ENCODE measurements at regions of chr3 and their contacts with region 1.

Region 1: DNA sequence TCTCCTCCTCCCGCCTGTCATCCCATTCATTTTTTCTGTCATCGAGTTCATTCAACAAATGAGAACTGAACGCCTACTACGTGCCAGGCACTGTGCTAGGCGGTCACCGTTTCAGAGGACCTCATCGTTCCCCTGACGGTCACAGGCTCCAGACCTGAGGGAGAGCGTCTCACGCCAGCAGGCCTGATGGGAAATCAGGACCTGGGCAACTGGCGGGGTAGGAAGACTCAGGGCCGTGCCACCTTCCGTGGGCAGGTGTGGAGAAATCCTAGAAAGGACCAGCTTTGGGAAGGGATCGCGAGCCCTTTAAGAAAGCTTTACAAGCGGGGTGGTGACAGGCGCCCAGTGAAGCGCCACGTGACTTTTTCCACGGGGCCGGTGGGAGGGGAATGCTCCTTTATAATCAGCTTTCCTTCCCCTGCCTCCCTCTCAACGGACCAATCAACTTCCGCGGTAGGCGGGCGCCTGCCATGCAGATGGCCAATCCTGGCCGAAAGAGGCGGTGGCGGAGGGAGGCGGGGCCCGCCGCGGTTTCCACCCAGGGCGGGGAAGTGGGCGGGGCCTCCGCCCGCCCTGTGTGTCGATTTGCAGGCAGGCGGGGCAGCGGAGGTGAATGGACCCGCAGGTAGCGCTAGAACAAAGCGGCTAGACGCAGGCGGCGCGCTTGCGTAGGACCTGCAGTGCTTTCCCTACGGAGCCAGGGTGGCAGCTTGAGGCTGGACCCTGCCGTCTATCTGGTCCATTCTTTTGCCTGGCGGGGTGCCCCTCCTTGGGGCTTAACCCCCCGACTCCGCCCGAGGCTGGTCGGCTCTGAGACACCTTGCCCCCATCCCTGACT is 816 bp upstream of the DUSP7 start:
- DNase-seq: peak; percentile 100
- H3K4me3 Mint-ChIP-seq: peak overlapping the region; percentile 78
- H3K27ac Mint-ChIP-seq: peak overlapping the region; percentile 92
- H3K4me1 Mint-ChIP-seq: peaks cover 28% of the 10 kb centered on the region
- H3K27me3 Mint-ChIP-seq: no peaks in the 10 kb centered on the region

Region 2: DNA sequence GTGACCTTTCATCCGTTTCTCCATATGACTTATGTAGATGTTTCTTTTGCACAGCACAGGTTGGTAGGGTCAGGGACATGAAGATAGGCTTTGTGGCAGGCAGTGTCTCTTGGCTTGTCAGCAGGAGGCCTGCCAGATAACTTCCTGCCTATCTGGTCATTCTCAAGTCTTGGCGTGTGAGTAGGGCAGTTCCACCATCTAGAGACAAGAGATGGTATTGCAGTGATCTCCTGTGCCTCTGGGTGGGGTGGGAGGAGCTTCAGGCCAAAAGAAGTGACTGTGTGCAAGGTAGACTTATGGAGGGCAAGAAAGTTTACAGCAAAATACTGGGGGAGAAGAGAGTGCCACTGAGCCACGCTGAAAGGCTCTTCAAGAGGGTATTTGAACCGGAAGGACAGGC is 375.1 kb before region 1 on chr3:
- CTCF ChIA-PET with region 1: no interaction called
- POLR2A ChIA-PET with region 1: no interaction called
- intact Hi-C with region 1: loop called (anchors 10 kb)
- DNase-seq: peak; percentile 86
- H3K4me3 Mint-ChIP-seq: no peak overlapping the region
- H3K27ac Mint-ChIP-seq: peak overlapping the region; percentile 79
- H3K4me1 Mint-ChIP-seq: peaks cover 83% of the 10 kb centered on the region
- H3K27me3 Mint-ChIP-seq: no peaks in the 10 kb centered on the region

Region 3: GRCh38 chr3:51974963-51975851 is 82.0 kb before region 1 on chr3 and contains the start of gene ABHD14A:
- CTCF ChIA-PET with region 1: interaction called, 26 read pairs
- POLR2A ChIA-PET with region 1: interaction called, 4 read pairs
- intact Hi-C with region 1: loop called (anchors 5 kb)
- DNase-seq: peak; percentile 79
- H3K4me3 Mint-ChIP-seq: peak within 1 kb of the TSS; percentile 99
- H3K27ac Mint-ChIP-seq: peak within 1 kb of the TSS; percentile 97
- H3K4me1 Mint-ChIP-seq: peaks cover 36% of the 10 kb centered on the region
- H3K27me3 Mint-ChIP-seq: no peaks in the 10 kb centered on the region
- total RNA-seq, gene ABHD14A: 7.9 to 8.6 TPM

Region 4: DNA sequence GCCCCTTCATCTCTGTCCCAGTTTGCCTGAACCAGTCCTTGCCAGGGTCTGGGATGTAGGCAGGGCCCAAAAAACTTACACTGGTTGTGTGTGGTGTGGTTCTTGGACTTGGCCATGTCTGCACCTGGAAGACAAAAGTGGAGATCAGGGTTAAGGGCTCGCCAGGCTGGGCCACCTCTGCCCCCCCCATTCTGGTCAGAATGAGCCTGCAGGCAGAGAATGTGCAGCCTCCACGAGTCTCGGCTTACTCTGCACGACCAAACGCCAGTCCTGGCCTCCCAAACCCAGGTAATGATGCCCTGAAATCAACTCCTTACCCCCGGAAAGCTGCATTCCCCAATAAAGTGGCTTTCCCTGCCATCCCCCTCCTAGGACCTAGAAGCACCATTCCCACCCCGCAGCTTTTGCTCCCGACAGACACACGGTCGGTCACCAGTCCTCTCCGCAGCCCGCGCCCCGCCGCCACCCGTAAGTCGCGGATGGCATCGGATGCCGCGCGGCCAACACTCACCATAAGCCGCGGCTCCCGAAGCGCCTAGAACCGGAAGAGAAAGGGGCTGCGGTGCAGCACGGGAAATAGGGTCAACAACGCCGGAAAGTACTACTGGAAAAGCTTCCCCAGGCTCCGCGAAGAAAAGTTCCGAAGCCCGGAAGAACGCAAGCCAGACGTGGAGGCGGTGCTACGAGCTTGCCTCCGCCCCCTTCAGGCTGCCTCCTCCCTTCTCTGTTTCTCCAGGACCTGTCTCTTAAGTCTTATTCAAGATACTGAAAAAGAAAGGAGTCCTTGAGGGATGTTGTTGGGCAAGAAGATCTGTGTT is 61.6 kb before region 1 on chr3 and contains the start of gene RPL29:
- CTCF ChIA-PET with region 1: interaction called, 50 read pairs
- POLR2A ChIA-PET with region 1: interaction called, 18 read pairs
- intact Hi-C with region 1: loop called (anchors 1 kb)
- DNase-seq: peak; percentile 96
- H3K4me3 Mint-ChIP-seq: peak within 1 kb of the TSS; percentile 98
- H3K27ac Mint-ChIP-seq: peak within 1 kb of the TSS; percentile 99
- H3K4me1 Mint-ChIP-seq: peaks cover 34% of the 10 kb centered on the region
- H3K27me3 Mint-ChIP-seq: no peaks in the 10 kb centered on the region
- total RNA-seq, gene RPL29: 1,502 to 1,507 TPM

Region 5: GRCh38 chr3:52123106-52123725 is 66.0 kb after region 1 on chr3:
- CTCF ChIA-PET with region 1: interaction called, 35 read pairs
- POLR2A ChIA-PET with region 1: interaction called, 3 read pairs
- intact Hi-C with region 1: loop called (anchors 1 kb)
- DNase-seq: peak; percentile 78
- H3K4me3 Mint-ChIP-seq: no peak overlapping the region
- H3K27ac Mint-ChIP-seq: no peak overlapping the region
- H3K4me1 Mint-ChIP-seq: peaks cover 4% of the 10 kb centered on the region
- H3K27me3 Mint-ChIP-seq: no peaks in the 10 kb centered on the region

Region 6: GRCh38 chr3:52154117-52155094 is 97.2 kb after region 1 on chr3 and contains the start of gene POC1A:
- CTCF ChIA-PET with region 1: interaction called, 9 read pairs
- POLR2A ChIA-PET with region 1: interaction called, 16 read pairs
- intact Hi-C with region 1: loop called (anchors 1 kb)
- DNase-seq: peak; percentile 94
- H3K4me3 Mint-ChIP-seq: peak within 1 kb of the TSS; percentile 88
- H3K27ac Mint-ChIP-seq: peak within 1 kb of the TSS; percentile 89
- H3K4me1 Mint-ChIP-seq: peaks cover 20% of the 10 kb centered on the region
- H3K27me3 Mint-ChIP-seq: no peaks in the 10 kb centered on the region
- total RNA-seq, gene POC1A: 28.5 to 30.5 TPM

Region 7: DNA sequence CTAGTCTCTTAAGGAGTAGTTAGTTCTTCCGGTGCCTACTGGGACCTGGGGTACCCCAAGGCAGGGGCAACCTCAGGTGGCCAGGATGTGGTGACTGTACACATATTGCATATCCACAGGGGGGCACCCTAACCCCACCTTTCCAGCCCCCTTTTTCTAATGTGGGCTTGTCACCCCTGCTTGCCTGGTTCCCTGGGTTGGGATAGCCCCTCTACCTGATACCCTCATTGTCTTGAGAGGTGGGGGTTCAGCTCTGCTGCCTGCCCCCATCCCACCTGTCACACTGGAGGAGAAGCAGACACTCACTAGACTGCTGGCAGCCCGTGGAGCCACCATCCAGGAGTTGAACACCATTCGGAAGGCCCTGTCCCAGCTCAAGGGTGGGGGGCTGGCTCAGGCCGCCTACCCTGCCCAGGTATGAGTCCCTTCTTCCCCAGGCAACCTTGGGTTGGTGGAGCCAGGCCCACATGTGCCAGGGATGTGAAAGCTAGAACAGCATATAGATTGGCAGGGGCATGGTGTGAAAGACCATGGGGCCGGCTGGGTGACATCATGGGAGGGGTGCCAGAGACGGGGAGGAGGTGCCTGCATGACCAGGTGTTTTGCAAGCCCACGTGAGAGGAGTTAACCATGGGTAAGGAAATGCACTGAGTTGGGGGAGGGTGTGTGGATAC is 234.5 kb after region 1 on chr3:
- CTCF ChIA-PET with region 1: no interaction called
- POLR2A ChIA-PET with region 1: interaction called, 10 read pairs
- intact Hi-C with region 1: no loop called
- DNase-seq: peak; percentile 57
- H3K4me3 Mint-ChIP-seq: no peak overlapping the region
- H3K27ac Mint-ChIP-seq: no peak overlapping the region
- H3K4me1 Mint-ChIP-seq: peaks cover 17% of the 10 kb centered on the region
- H3K27me3 Mint-ChIP-seq: no peaks in the 10 kb centered on the region